Naive thymus-derived CD4-positive, alpha-beta T cell (primary cell): ENCODE measurements at regions of chr3 and their contacts with region 1.

Region 1: GRCh38 chr3:119034256-119035013 is at the start of gene IGSF11:
- DNase-seq: peak; percentile 52 to 79 (median 68)
- ATAC-seq: peak; percentile 93
- H3K4me3 ChIP-seq: peak within 1 kb of the TSS; percentile 62
- H3K4me3 Mint-ChIP-seq: peak within 1 kb of the TSS; percentile 83 to 93 (median 90)
- H3K27ac ChIP-seq: no peak within 1 kb of the TSS
- H3K27ac Mint-ChIP-seq: peak within 1 kb of the TSS in 3 of 9 donors; percentile 46 to 81 (median 58)
- H3K4me1 ChIP-seq: no peaks in the 10 kb centered on the region
- H3K4me1 Mint-ChIP-seq: peaks cover 0 to 17% (median 10%) of the 10 kb centered on the region in 7 donors
- H3K27me3 ChIP-seq: peaks cover 5 to 7% of the 10 kb centered on the region in 2 donors
- H3K27me3 Mint-ChIP-seq: peaks cover 34 to 64% (median 48%) of the 10 kb centered on the region in 5 donors
- total RNA-seq, gene IGSF11: 0.15 to 0.85 (median 0.49) TPM in 4 of 5 experiments, not detected in the other

Region 2: GRCh38 chr3:118890186-118890585 is 144.2 kb before region 1 on chr3:
- CTCF ChIA-PET with region 1: interaction called, 370 read pairs
- POLR2A ChIA-PET with region 1: interaction called, 15 read pairs
- intact Hi-C with region 1: loop called in 1 of 2 experiments (anchors 1 kb)
- DNase-seq: no peak
- ATAC-seq: no peak
- H3K4me3 ChIP-seq: no peak overlapping the region
- H3K4me3 Mint-ChIP-seq: no peak overlapping the region
- H3K27ac ChIP-seq: no peak overlapping the region
- H3K27ac Mint-ChIP-seq: no peak overlapping the region
- H3K4me1 ChIP-seq: no peaks in the 10 kb centered on the region
- H3K4me1 Mint-ChIP-seq: peaks cover 0 to 15% (median 1%) of the 10 kb centered on the region in 7 donors
- H3K27me3 ChIP-seq: no peaks in the 10 kb centered on the region
- H3K27me3 Mint-ChIP-seq: peaks cover 0 to 16% (median 6%) of the 10 kb centered on the region in 5 donors

Region 3: GRCh38 chr3:118949113-118949760 is 85.2 kb before region 1 on chr3:
- CTCF ChIA-PET with region 1: no interaction called
- POLR2A ChIA-PET with region 1: no interaction called
- intact Hi-C with region 1: loop called in 1 of 2 experiments (anchors 2 kb)
- DNase-seq: peak in 7 of 9 donors; percentile 19 to 54 (median 40)
- ATAC-seq: peak; percentile 85
- H3K4me3 ChIP-seq: no peak overlapping the region
- H3K4me3 Mint-ChIP-seq: peak overlapping the region; percentile 31 to 91 (median 74)
- H3K27ac ChIP-seq: no peak overlapping the region
- H3K27ac Mint-ChIP-seq: peak overlapping the region; percentile 61 to 91 (median 83)
- H3K4me1 ChIP-seq: peaks cover 6 to 31% of the 10 kb centered on the region in 2 donors
- H3K4me1 Mint-ChIP-seq: peaks cover 19 to 78% (median 63%) of the 10 kb centered on the region in 7 donors
- H3K27me3 ChIP-seq: no peaks in the 10 kb centered on the region
- H3K27me3 Mint-ChIP-seq: peaks cover 0 to 13% (median 0%) of the 10 kb centered on the region in 5 donors

Region 4: GRCh38 chr3:118960876-118961450 is 73.5 kb before region 1 on chr3:
- CTCF ChIA-PET with region 1: interaction called, 20 read pairs
- POLR2A ChIA-PET with region 1: no interaction called
- intact Hi-C with region 1: loop called (anchors 1 to 5 kb)
- DNase-seq: no peak
- ATAC-seq: no peak
- H3K4me3 ChIP-seq: no peak overlapping the region
- H3K4me3 Mint-ChIP-seq: no peak overlapping the region
- H3K27ac ChIP-seq: no peak overlapping the region
- H3K27ac Mint-ChIP-seq: no peak overlapping the region
- H3K4me1 ChIP-seq: peaks cover 9 to 19% of the 10 kb centered on the region in 2 donors
- H3K4me1 Mint-ChIP-seq: peaks cover 13 to 34% (median 29%) of the 10 kb centered on the region in 7 donors
- H3K27me3 ChIP-seq: no peaks in the 10 kb centered on the region
- H3K27me3 Mint-ChIP-seq: peaks cover 0 to 25% (median 4%) of the 10 kb centered on the region in 5 donors

Region 5: DNA sequence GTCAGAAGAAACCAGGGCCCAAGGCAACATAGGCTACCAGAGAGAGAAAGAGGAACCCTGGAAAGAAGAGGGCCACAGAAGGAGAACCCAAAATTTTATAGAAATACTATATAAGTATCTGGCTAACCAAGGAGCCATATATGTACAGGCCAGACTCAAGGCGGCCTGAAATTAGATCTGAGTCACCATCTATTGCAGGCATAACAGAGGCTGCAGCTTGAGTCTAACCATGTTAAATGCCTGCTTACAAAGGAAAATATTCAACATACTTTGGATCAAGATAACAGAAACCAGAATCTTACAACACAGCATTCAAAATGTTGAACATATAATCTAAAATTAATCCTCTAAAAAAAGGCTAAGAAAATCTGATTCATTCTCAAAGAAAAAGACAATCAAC is 22.9 kb before region 1 on chr3:
- CTCF ChIA-PET with region 1: interaction called, 5 read pairs
- POLR2A ChIA-PET with region 1: no interaction called
- intact Hi-C with region 1: loop called in 1 of 2 experiments (anchors 1 kb)
- DNase-seq: no peak
- ATAC-seq: no peak
- H3K4me3 ChIP-seq: no peak overlapping the region
- H3K4me3 Mint-ChIP-seq: no peak overlapping the region
- H3K27ac ChIP-seq: no peak overlapping the region
- H3K27ac Mint-ChIP-seq: no peak overlapping the region
- H3K4me1 ChIP-seq: no peaks in the 10 kb centered on the region
- H3K4me1 Mint-ChIP-seq: peaks cover 0 to 8% (median 0%) of the 10 kb centered on the region in 7 donors
- H3K27me3 ChIP-seq: no peaks in the 10 kb centered on the region
- H3K27me3 Mint-ChIP-seq: peaks cover 0 to 8% (median 5%) of the 10 kb centered on the region in 5 donors

Region 6: GRCh38 chr3:119098619-119099222 is 64.3 kb after region 1 on chr3:
- CTCF ChIA-PET with region 1: interaction called, 18 read pairs
- POLR2A ChIA-PET with region 1: no interaction called
- intact Hi-C with region 1: loop called (anchors 1 kb)
- DNase-seq: peak in 7 of 9 donors; percentile 24 to 65 (median 54)
- ATAC-seq: peak; percentile 50
- H3K4me3 ChIP-seq: no peak overlapping the region
- H3K4me3 Mint-ChIP-seq: no peak overlapping the region
- H3K27ac ChIP-seq: no peak overlapping the region
- H3K27ac Mint-ChIP-seq: no peak overlapping the region
- H3K4me1 ChIP-seq: no peaks in the 10 kb centered on the region
- H3K4me1 Mint-ChIP-seq: peaks cover 0 to 1% (median 0%) of the 10 kb centered on the region in 7 donors
- H3K27me3 ChIP-seq: no peaks in the 10 kb centered on the region
- H3K27me3 Mint-ChIP-seq: peaks cover 0 to 4% (median 0%) of the 10 kb centered on the region in 5 donors